Prostate gland (tissue), 2 donors: ENCODE measurements at regions of chr3 and their contacts with region 1.

Region 1: DNA sequence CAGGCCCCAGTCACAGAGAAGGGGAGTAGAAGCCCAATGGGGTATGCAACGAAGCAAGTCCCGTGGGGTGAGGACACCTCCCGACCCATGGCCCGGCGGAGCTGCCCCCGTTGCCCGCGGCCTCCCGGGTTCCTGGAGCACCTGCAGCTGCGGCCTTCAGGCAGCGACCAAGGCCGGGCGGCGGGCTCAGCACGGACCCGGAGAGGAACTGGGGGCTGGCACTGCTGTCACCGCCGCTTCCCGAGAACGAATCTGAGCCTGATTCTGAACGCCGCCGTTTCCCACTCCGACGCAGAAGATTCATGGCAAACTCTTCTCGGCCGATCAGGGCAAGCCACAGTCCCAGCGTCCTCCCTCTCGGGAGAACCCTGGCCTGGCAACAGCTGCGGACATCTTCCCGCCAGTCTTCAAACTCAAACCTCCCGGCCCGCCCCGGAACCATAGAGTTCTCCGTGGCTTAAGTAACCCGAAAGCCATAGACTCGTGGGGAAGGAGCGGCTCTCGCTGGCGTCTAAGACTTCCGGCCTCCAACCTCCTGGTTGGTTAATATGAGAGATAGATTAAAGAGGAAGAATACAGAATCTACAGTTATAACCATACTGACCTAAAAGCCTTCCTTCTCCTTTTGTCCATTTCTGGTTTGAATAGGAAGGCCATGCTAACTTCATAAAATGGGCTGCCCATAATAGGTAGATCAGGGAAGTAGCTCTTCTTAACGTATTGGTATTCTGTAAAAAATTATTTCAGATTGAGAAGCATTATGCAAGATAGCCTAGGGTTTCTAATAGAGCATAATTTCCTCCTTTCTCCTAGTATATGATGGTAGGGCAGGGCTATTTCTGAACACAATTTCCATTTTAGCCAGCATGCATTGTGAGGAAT is at the start of gene POLQ:
- DNase-seq: peak; percentile 90
- H3K4me3 ChIP-seq: peak within 1 kb of the TSS; percentile 40 to 46
- H3K27ac ChIP-seq: peak within 1 kb of the TSS; percentile 18 to 58
- H3K4me1 ChIP-seq: no peaks in the 10 kb centered on the region
- H3K27me3 ChIP-seq: no peaks in the 10 kb centered on the region
- CTCF ChIP-seq: peak in 1 of 4 experiments; percentile 9
- POLR2A ChIP-seq: no peak
- total RNA-seq, gene POLQ: 1.0 to 3.0 TPM

Region 2: DNA sequence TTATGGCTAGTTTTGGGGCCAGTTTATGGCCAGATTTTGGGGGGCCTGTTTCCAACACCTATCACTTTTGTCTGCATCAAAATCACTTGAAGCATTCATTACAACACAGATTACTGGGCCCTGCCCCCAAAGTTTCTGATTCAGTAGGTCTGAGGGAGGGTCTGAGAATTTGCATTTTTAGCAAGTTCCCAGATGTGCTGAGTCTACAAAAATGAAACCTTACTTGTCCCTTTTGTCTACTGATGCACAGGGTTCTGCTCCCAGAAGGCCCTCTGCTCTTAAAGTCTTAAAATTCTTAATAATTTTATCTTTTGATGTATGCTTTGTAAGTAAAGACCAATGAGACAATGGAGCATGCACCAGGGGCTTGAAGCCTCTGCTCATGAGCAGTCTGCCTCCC is 146.0 kb before region 1 on chr3:
- intact Hi-C with region 1: no loop called
- DNase-seq: no peak
- H3K4me3 ChIP-seq: no peak overlapping the region
- H3K27ac ChIP-seq: no peak overlapping the region
- H3K4me1 ChIP-seq: no peaks in the 10 kb centered on the region
- H3K27me3 ChIP-seq: no peaks in the 10 kb centered on the region
- CTCF ChIP-seq: no peak
- POLR2A ChIP-seq: no peak

Region 3: DNA sequence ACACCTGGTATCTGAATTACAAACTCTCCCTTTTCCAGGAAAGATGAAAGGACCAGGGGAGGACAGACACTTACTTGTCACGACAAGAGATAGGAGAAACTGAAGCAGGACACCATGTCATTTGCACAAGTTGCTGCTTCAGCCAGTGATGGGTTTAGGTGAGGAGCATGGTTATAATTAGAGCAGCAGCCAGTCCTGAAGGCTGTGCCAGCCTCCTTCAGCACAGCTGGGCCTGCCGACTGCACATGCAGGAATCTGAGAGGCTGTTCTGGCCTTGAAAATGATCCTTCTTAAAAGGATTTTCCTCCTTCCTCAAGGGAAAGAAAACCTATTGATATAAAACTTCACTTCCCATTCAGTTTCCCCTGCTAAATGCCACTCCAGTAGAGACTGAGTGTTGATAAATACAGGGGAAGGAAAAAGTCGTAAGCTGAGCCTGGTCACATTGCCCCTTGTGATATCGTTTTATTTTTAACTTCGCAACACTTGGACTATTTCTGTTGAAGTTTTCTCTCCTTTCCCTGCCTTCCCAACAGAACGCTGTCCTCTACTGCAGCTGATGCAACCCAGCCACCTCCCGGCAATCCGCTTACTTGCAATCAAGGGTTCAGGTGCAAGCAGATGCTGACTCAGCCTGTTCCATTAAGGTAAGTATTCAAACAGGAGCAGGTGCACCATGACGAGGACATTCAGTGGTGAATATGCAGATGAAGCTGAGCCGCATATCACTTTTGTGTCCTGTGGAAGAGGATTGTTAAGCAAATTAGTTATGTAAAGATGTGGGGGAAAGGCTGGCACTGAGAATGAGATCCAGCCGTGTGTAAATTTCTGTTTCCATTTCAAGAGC is 47.3 kb after region 1 on chr3 and contains the start of gene FBXO40:
- intact Hi-C with region 1: loop called (anchors 5 kb)
- DNase-seq: no peak
- H3K4me3 ChIP-seq: no peak within 1 kb of the TSS
- H3K27ac ChIP-seq: no peak within 1 kb of the TSS
- H3K4me1 ChIP-seq: no peaks in the 10 kb centered on the region
- H3K27me3 ChIP-seq: no peaks in the 10 kb centered on the region
- CTCF ChIP-seq: no peak
- POLR2A ChIP-seq: no peak
- total RNA-seq, gene FBXO40: 0.18 to 0.68 TPM

Region 4: GRCh38 chr3:121619691-121620090 is 73.9 kb after region 1 on chr3:
- intact Hi-C with region 1: no loop called
- DNase-seq: no peak
- H3K4me3 ChIP-seq: no peak overlapping the region
- H3K27ac ChIP-seq: no peak overlapping the region
- H3K4me1 ChIP-seq: no peaks in the 10 kb centered on the region
- H3K27me3 ChIP-seq: no peaks in the 10 kb centered on the region
- CTCF ChIP-seq: no peak
- POLR2A ChIP-seq: no peak

Region 5: GRCh38 chr3:121648219-121648958 is 102.6 kb after region 1 on chr3:
- intact Hi-C with region 1: loop called (anchors 5 kb)
- DNase-seq: peak; percentile 43
- H3K4me3 ChIP-seq: no peak overlapping the region
- H3K27ac ChIP-seq: peak overlapping the region in 1 of 2 donors; percentile 30
- H3K4me1 ChIP-seq: no peaks in the 10 kb centered on the region
- H3K27me3 ChIP-seq: no peaks in the 10 kb centered on the region
- CTCF ChIP-seq: peak in 1 of 4 experiments; percentile 17
- POLR2A ChIP-seq: no peak

Region 6: DNA sequence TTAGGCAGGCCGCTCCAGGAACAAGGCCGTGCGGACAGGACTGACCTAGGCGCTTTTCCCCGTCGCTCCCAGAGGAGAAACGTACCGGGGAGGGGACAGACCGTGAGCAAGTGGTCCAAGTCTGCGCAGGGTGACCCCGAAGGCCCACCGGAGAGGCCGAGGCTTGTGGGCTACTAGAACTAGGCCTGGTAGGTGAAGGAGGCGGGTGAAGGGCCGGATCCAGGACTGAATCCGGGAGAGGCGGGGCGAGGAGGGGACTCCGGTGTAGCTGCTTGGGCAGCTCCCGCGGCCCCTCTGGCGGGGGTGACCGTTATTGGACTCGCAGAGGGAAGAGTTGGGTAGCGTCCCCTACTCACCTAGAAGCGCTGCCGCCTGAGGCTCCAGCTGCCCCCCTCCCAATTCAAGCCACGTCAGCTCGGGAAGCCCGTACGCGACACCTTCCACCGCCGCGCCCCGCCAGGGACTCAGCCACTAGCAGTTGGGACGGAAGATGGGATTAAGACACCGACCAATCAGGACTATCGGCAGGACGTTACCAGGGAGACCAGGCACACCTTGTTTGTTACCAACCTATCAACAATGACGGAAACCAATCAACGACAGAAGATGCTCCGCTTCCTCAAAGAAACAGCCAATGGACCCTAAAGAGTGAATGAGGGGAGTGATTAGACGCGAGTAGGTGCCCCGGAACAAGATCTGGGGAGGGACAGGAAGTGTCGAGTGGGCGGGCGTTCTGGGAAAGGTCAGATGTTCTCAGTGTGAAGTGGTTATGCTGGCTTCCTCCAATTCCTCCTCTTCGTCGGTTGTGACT is 203.7 kb after region 1 on chr3 and contains the start of gene GOLGB1:
- intact Hi-C with region 1: loop called (anchors 10 kb)
- DNase-seq: peak; percentile 99
- H3K4me3 ChIP-seq: peak within 1 kb of the TSS; percentile 74 to 85
- H3K27ac ChIP-seq: peak within 1 kb of the TSS; percentile 92 to 93
- H3K4me1 ChIP-seq: peaks cover 6% of the 10 kb centered on the region
- H3K27me3 ChIP-seq: no peaks in the 10 kb centered on the region
- CTCF ChIP-seq: no peak
- POLR2A ChIP-seq: peak; percentile 95
- total RNA-seq, gene GOLGB1: 80.3 to 102 TPM

Region 7: DNA sequence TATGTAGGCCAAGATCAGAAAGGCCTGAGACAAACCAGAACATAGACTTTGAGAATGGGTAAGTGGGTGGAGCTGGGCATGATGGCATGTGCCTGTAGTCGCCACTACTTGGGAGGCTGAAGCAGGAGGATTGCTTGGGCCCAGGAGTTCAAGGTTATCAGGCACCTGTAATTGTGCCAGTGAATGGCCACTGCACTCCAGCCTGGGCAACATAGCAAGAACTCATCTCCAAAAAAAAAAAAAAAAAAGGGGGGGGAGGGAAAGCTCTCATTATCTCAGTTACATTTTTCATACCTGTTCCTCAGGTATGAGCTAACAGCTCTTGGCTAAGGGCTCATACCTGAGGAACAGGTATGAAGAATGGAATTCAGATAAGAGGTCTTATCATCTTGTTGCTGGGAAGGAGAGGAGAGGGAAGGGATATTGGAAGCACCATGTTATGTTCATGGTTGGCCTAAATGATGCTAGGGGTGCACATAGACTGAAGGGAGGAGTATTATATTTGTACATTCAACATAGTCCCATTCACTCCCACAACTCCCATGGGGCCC is 350.9 kb after region 1 on chr3:
- intact Hi-C with region 1: no loop called
- DNase-seq: no peak
- H3K4me3 ChIP-seq: no peak overlapping the region
- H3K27ac ChIP-seq: no peak overlapping the region
- H3K4me1 ChIP-seq: no peaks in the 10 kb centered on the region
- H3K27me3 ChIP-seq: no peaks in the 10 kb centered on the region
- CTCF ChIP-seq: no peak
- POLR2A ChIP-seq: no peak

Region 8: DNA sequence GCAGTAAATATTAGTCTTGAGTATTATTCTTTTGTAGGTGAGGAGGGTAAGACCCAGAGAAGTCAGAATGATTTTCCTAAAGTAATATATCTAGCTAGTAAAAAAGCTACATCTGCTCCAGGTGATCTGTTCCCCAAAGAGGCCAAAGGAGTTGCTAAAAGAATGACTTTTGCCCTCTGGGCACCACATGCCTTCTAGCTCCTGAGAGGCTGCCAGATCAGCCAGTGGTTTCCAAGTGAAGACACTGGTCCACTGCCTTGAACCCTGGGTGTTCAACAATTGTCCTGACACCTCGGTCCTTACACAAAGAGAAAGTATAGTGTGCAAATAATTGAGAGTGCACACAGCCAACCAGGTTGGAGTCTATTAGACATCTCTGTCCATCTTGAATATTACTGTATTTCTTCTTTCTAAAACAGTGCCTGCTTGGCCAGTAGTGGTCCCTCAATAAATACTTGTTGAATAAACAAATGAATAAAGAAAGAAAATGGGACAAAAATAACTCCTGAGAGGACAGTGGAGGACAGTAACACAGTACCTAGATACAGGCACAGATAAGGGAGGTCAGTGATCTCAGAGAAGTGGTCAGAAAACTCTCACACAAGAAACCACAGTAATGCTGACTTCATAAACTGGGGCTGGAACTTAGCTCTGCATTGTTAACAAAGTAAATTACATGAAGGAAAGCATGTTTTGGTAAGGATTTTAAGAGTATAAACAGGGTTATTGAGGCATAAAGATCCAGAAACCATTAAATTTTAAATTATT is 722.6 kb after region 1 on chr3:
- intact Hi-C with region 1: loop called (anchors 5 kb)
- DNase-seq: no peak
- H3K4me3 ChIP-seq: no peak overlapping the region
- H3K27ac ChIP-seq: no peak overlapping the region
- H3K4me1 ChIP-seq: no peaks in the 10 kb centered on the region
- H3K27me3 ChIP-seq: no peaks in the 10 kb centered on the region
- CTCF ChIP-seq: no peak
- POLR2A ChIP-seq: no peak

Region 9: GRCh38 chr3:122679085-122679881 is 1133.5 kb after region 1 on chr3:
- intact Hi-C with region 1: loop called (anchors 5 kb)
- DNase-seq: peak; percentile 81
- H3K4me3 ChIP-seq: peak overlapping the region in 1 of 2 donors; percentile 73
- H3K27ac ChIP-seq: peak overlapping the region; percentile 96
- H3K4me1 ChIP-seq: no peaks in the 10 kb centered on the region
- H3K27me3 ChIP-seq: no peaks in the 10 kb centered on the region
- CTCF ChIP-seq: peak; percentile 70 to 93 (median 90)
- POLR2A ChIP-seq: no peak

Region 10: DNA sequence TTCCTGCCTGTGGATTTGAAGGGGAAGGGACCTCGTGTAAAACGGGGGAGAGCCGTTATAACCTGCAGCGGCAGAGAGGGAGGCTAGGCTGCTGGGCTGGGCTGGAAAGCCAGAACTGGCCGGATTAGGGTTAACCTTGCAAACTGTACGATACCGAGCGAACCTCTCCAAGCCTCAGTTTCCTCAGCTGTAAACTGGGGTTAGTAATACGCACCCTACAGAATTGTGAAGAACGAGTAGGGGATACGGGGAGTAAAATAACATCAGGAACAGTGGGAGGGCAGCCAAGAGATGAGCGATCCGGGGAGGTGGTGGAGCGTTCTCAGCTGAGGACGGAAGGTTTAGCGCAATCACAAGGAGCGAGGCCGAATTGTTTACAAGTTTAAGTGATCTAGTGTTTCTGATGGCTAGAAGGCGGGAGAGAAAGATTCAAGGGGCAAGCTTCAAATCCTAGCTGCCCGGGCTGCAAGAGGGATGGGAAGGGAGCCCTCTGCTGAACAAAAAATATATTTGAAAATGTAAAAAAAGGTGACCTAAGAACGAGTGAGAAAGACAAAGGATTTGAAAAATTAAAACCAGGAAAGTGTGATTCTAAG is 1482.5 kb after region 1 on chr3:
- intact Hi-C with region 1: loop called (anchors 5 kb)
- DNase-seq: peak; percentile 25
- H3K4me3 ChIP-seq: peak overlapping the region; percentile 26 to 45
- H3K27ac ChIP-seq: no peak overlapping the region
- H3K4me1 ChIP-seq: no peaks in the 10 kb centered on the region
- H3K27me3 ChIP-seq: no peaks in the 10 kb centered on the region
- CTCF ChIP-seq: peak in 2 of 4 experiments; percentile 51 to 60
- POLR2A ChIP-seq: no peak